ENCODE measurements at regions of chr2 and their contacts with region 1.

Region 1: GRCh38 chr2:7044261-7045250 is 127.3 kb downstream of the RNF144A start:
- DNase-seq: peak; percentile 86

Region 2: DNA sequence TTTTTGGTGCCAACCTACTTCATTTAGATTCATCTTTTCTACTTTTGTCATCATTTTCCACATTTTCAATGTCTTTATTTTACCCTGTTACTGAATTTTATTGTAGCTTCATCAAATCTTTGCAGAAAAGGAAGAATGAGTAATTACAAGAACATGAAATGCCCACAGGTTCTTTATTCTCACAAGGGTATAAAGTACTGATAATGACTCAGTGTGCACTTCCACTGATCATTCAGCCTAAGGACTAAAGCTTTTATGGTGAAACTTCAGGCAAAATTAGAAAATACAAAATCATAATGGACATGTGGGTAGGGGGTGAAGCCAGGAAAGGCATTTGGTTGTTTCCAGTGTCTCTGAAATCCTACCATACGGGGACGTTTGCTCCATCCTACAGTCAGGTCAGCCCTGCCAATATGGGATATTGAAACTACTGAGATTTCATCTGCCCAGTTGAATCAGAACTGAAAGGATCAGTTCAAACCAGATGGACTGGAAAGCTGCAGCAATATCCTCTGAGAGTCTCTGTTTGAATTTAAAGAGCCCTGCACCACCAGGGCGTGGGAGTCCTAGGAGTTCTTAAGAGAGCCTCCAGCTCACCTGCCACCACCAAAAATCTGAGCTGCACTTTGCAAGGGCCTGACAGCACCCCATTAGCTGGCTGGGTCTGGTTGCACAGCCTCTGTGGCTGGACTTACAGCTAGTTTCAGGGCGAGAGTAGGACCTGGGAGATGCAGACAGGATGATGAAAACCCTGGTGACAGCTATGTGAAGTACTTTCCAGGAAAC is 569.2 kb before region 1 on chr2:
- intact Hi-C with region 1: no loop called
- DNase-seq: no peak

Region 3: GRCh38 chr2:6754419-6754818 is 290.1 kb before region 1 on chr2:
- intact Hi-C with region 1: no loop called
- DNase-seq: no peak

Region 4: DNA sequence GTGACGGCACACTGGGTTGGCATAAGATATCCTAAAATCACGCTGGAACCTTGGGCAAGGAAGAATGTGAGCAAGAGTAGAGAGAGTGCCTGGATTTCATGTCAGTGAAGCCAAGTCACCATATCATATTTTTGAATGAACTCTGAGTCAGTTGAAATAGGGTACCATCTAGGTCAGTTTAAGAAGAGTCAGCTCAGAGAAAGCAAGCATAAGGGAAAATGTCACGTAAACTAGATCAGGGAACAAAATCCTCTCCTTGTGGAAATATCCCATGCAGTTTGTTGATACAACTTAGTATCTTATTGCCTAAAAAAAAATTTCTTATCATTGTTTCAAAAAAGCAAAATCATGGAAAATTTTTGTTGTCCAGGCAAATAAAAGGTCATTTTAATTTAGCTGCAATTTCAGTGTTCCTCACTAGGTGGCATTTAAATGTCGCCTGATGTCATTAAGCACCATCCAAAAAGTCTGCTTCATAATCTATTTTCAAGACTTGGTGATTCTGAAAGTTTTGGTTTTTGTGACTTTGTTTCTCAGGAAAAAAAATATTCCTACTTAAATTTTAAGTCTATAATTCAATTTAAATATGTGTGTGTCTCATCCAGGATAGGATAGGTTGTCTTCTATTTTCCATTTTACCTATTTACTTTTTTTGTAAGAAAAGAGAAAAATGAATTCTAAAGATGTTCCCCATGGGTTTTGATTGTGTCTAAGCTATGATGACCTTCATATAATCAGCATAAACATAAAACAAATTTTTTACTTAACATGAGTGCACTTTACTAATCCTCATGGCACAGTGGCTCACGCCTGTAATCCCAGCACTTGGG is 147.4 kb before region 1 on chr2:
- intact Hi-C with region 1: loop called (anchors 2 kb)
- DNase-seq: no peak

Measured in cardiac septum (tissue), 1 donor.